K562 (cell line): ENCODE measurements at regions of chr21 and their contacts with region 1.

Region 1: GRCh38 chr21:29349702-29350101 is 51.0 kb downstream of the BACH1 start:
- DNase-seq: peak in 1 of 4 experiments; percentile 54
- ATAC-seq: no peak; the same call in 2 of the 3 replicates
- H3K4me3 ChIP-seq: no peak overlapping the region
- H3K27ac ChIP-seq: no peak overlapping the region
- H3K4me1 ChIP-seq: peaks cover 4 to 14% of the 10 kb centered on the region in 2 experiments; a peak in 3 of 5 replicates
- H3K27me3 ChIP-seq: no peaks in the 10 kb centered on the region
- CTCF ChIP-seq: no peak
- EP300 ChIP-seq: no peak
- POLR2A ChIP-seq: no peak
- RAD21 ChIP-seq: no peak

Region 2: DNA sequence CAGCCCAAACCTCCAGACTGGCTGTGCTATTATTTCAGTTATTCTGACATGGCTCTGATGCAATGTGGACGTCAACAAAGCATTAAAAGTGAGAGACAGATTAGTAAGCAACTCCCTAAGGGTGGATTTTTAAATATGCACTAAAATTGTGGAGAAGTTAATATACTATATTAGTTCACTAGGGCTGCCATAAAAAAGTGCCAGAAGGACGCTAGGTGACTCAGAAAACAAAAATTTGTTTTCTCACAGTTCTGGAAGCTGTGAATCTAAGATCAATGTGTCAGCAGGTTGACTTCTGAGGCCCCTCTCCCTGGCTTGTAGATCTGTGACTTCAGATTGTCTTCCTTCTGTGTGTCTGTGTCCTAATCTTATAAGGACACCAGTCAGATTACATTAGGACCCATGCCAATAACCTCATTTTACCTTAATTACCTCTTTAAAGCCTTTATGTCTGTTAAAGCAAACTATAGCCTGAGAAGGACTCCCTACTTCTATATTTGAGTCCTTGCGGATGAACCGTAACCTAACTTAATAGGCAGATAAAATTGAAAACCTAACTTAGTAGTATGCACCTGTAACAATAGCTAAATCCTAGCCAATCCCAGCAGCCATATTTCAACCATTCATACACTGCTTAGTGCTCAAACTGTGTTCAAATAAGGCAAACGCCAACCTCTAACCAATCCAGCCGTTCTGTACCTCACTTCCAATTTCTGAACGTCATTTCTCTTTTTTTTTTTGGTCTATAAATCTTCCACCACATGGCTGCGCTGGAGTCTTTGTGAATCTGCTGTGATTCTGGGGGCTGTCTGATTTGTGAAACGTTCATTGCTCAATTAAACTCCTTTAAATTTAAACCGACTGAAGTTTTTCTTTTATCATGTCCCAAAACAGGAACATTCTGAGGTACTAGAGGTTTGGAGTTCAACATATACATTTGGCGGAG is 116.8 kb before region 1 on chr21:
- CTCF ChIA-PET with region 1: no interaction called
- POLR2A ChIA-PET with region 1: interaction called, 3 read pairs
- in situ Hi-C with region 1: no loop called
- intact Hi-C with region 1: loop called (anchors 2 kb)
- DNase-seq: peak in 2 of 4 experiments; percentile 18 to 38
- ATAC-seq: peak; percentile 72
- H3K4me3 ChIP-seq: no peak overlapping the region
- H3K27ac ChIP-seq: no peak overlapping the region
- H3K4me1 ChIP-seq: peaks cover 0 to 9% of the 10 kb centered on the region in 2 experiments; a peak in 3 of 5 replicates
- H3K27me3 ChIP-seq: peaks cover 14 to 19% of the 10 kb centered on the region in 2 experiments
- CTCF ChIP-seq: peak; percentile 15 to 53 (median 22); a peak in 3 of 6 replicates
- EP300 ChIP-seq: peak; percentile 67; the same call in 1 of the 2 replicates
- POLR2A ChIP-seq: no peak
- RAD21 ChIP-seq: peak; percentile 56 to 58